Activated T-helper 1 cell treated with anti-CD3 and anti-CD28 coated beads, Interleukin-12 subunit alpha, Interleukin-12 subunit beta, Interleukin-2, Interleukin-4 antibody, amounts not matched to agents 30 ng/mL and 10 ng/mL and 1 ng/mL, durations not matched to agents 14 hours and 24 hours and 36 hours (primary cell): ENCODE measurements at regions of chr7 and their contacts with region 1.

Region 1: GRCh38 chr7:44638611-44639557 is 32.5 kb downstream of the OGDH start:
- DNase-seq: peak; percentile 84
- H3K4me3 Mint-ChIP-seq: peak overlapping the region; percentile 82
- H3K27ac Mint-ChIP-seq: peak overlapping the region; percentile 100
- H3K4me1 Mint-ChIP-seq: peaks cover 81% of the 10 kb centered on the region
- H3K27me3 Mint-ChIP-seq: no peaks in the 10 kb centered on the region

Region 2: GRCh38 chr7:43925984-43926797 is 712.7 kb before region 1 on chr7 and contains the start of gene UBE2D4:
- intact Hi-C with region 1: loop called (anchors 10 kb)
- DNase-seq: peak; percentile 88
- H3K4me3 Mint-ChIP-seq: peak within 1 kb of the TSS; percentile 95
- H3K27ac Mint-ChIP-seq: peak within 1 kb of the TSS; percentile 97
- H3K4me1 Mint-ChIP-seq: peaks cover 30% of the 10 kb centered on the region
- H3K27me3 Mint-ChIP-seq: peaks cover 2% of the 10 kb centered on the region
- total RNA-seq, gene UBE2D4: 15.3 and 17.7 TPM in 2 replicates

Region 3: GRCh38 chr7:44581879-44582603 is 56.8 kb before region 1 on chr7 and contains the start of gene TMED4:
- intact Hi-C with region 1: loop called (anchors 1 kb)
- DNase-seq: peak; percentile 100
- H3K4me3 Mint-ChIP-seq: peak within 1 kb of the TSS; percentile 93
- H3K27ac Mint-ChIP-seq: peak within 1 kb of the TSS; percentile 93
- H3K4me1 Mint-ChIP-seq: peaks cover 33% of the 10 kb centered on the region
- H3K27me3 Mint-ChIP-seq: no peaks in the 10 kb centered on the region
- total RNA-seq, gene TMED4: 74.9 and 79.6 TPM in 2 replicates

Region 4: GRCh38 chr7:44622307-44623151 is 16.4 kb before region 1 on chr7:
- intact Hi-C with region 1: loop called (anchors 1 kb)
- DNase-seq: peak; percentile 40
- H3K4me3 Mint-ChIP-seq: peak overlapping the region; percentile 60
- H3K27ac Mint-ChIP-seq: peak overlapping the region; percentile 94
- H3K4me1 Mint-ChIP-seq: peaks cover 83% of the 10 kb centered on the region
- H3K27me3 Mint-ChIP-seq: no peaks in the 10 kb centered on the region

Region 5: GRCh38 chr7:44748045-44748947 is 109.4 kb after region 1 on chr7 and contains the start of gene ZMIZ2:
- intact Hi-C with region 1: loop called (anchors 1 kb)
- DNase-seq: peak; percentile 88
- H3K4me3 Mint-ChIP-seq: peak within 1 kb of the TSS; percentile 92
- H3K27ac Mint-ChIP-seq: peak within 1 kb of the TSS; percentile 95
- H3K4me1 Mint-ChIP-seq: peaks cover 45% of the 10 kb centered on the region
- H3K27me3 Mint-ChIP-seq: no peaks in the 10 kb centered on the region
- total RNA-seq, gene ZMIZ2: 123 and 129 TPM in 2 replicates

Region 6: DNA sequence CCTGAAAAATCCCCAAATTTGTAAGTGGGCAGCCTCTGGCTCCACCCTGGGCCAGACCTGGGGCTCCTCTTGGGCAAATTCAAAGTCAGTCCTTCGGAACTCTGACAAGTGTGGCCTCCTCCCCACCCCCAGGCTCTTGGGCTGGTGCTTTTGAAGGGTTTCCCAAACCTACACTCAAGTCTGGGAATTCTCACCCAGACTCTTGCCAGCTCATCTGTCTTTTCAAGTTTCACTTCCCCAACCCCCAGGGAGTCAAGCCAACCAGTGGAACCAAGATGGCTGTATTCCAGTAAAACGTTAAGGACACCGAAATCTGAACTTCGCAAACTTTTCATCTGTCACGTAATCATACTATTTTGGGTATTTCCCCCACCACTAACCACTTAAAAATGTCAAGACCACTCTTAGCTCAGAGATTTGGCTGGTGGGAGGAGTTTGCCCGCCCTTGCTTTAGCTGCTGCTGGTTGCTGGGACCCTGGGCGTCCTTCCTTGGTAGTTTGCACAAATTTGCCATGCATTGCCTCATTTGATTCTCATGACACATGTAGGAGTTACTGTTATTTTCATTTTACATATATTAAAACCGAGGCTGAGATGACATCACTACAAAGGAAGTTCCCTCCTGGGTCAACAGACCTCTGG is 341.6 kb after region 1 on chr7:
- intact Hi-C with region 1: loop called (anchors 1 kb)
- DNase-seq: peak; percentile 56
- H3K4me3 Mint-ChIP-seq: peak overlapping the region; percentile 98
- H3K27ac Mint-ChIP-seq: peak overlapping the region; percentile 98
- H3K4me1 Mint-ChIP-seq: peaks cover 78% of the 10 kb centered on the region
- H3K27me3 Mint-ChIP-seq: no peaks in the 10 kb centered on the region